Esophagus muscularis mucosa (tissue), 4 donors: ENCODE measurements at regions of chr2 and their contacts with region 1.

Region 1: GRCh38 chr2:38377050-38377828 is at the start of gene ATL2:
- DNase-seq: peak; percentile 98
- H3K4me3 ChIP-seq: peak within 1 kb of the TSS; percentile 86 to 98 (median 96)
- H3K27ac ChIP-seq: peak within 1 kb of the TSS; percentile 97 to 100 (median 100)
- H3K4me1 ChIP-seq: peaks cover 20 to 46% (median 45%) of the 10 kb centered on the region in 4 donors
- H3K27me3 ChIP-seq: no peaks in the 10 kb centered on the region
- CTCF ChIP-seq: no peak
- EP300 ChIP-seq: peak; percentile 12
- POLR2A ChIP-seq: peak; percentile 82
- total RNA-seq, gene ATL2: 159 to 260 (median 231) TPM

Region 2: DNA sequence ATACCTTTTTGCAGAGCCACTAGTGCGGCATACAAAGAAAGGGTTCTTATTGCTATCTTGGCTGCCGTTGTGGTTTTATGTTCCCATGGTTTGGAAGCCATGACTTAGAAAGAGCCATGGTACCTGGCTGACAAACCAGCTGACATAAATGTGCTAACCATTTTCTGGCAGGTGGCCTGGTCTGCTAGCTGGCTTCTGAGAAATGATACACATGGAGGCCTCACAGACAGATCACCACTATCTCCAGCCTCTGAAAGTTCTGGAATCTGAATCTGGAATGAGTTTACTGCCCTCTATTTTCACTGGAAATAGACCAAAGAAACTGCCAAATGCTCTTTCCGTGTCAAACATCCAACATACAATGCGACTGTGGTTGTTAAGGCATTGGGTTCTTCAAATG is 909.1 kb before region 1 on chr2:
- intact Hi-C with region 1: no loop called
- DNase-seq: no peak
- H3K4me3 ChIP-seq: no peak overlapping the region
- H3K27ac ChIP-seq: no peak overlapping the region
- H3K4me1 ChIP-seq: peaks cover 4 to 32% (median 21%) of the 10 kb centered on the region in 4 donors
- H3K27me3 ChIP-seq: no peaks in the 10 kb centered on the region
- CTCF ChIP-seq: no peak
- EP300 ChIP-seq: no peak
- POLR2A ChIP-seq: no peak

Region 3: DNA sequence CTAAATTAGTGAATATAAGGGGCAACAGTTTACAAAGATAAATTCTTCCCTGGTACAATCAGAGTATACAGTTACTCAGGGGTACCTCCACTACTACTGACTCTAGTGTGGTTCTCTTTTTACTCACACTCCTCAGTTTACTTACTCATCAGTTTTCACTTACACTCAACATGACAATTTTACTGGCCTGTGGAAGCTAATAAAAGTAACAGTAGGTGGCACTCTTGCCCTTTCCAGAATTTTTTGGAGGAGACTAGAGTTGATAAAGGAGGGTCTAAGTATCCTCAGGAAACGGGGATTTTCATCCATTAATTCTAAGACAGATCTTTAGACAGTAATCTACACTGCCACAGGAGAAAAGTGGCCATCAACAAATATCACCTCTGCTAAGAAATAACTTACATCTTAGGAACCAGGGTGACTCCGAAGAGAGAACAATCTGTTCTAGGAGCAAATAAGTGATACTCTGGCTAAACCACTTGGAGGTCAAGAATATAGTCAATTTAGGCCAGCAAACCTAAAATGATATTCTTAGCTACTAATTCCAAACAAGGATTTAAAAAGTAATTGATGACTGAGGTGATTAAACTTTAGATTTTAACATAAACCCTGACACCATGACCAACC is 61.4 kb before region 1 on chr2:
- intact Hi-C with region 1: loop called (anchors 5 kb)
- DNase-seq: no peak
- H3K4me3 ChIP-seq: no peak overlapping the region
- H3K27ac ChIP-seq: peak overlapping the region; percentile 41 to 69 (median 53)
- H3K4me1 ChIP-seq: peaks cover 0 to 53% (median 49%) of the 10 kb centered on the region in 4 donors
- H3K27me3 ChIP-seq: no peaks in the 10 kb centered on the region
- CTCF ChIP-seq: peak; percentile 72 to 80 (median 76)
- EP300 ChIP-seq: no peak
- POLR2A ChIP-seq: no peak

Region 4: GRCh38 chr2:38465789-38466127 is 88.5 kb after region 1 on chr2:
- intact Hi-C with region 1: loop called (anchors 2 kb)
- DNase-seq: no peak
- H3K4me3 ChIP-seq: no peak overlapping the region
- H3K27ac ChIP-seq: peak overlapping the region; percentile 85 to 95 (median 90)
- H3K4me1 ChIP-seq: peaks cover 0 to 97% (median 85%) of the 10 kb centered on the region in 4 donors
- H3K27me3 ChIP-seq: no peaks in the 10 kb centered on the region
- CTCF ChIP-seq: peak in 2 of 3 experiments; percentile 27 to 37
- EP300 ChIP-seq: no peak
- POLR2A ChIP-seq: no peak

Region 5: GRCh38 chr2:38515160-38516074 is 138.2 kb after region 1 on chr2:
- intact Hi-C with region 1: loop called (anchors 5 kb)
- DNase-seq: no peak
- H3K4me3 ChIP-seq: peak overlapping the region; percentile 40 to 56 (median 41)
- H3K27ac ChIP-seq: peak overlapping the region; percentile 87 to 90 (median 90)
- H3K4me1 ChIP-seq: peaks cover 0 to 58% (median 45%) of the 10 kb centered on the region in 4 donors
- H3K27me3 ChIP-seq: no peaks in the 10 kb centered on the region
- CTCF ChIP-seq: no peak
- EP300 ChIP-seq: no peak
- POLR2A ChIP-seq: no peak

Region 6: DNA sequence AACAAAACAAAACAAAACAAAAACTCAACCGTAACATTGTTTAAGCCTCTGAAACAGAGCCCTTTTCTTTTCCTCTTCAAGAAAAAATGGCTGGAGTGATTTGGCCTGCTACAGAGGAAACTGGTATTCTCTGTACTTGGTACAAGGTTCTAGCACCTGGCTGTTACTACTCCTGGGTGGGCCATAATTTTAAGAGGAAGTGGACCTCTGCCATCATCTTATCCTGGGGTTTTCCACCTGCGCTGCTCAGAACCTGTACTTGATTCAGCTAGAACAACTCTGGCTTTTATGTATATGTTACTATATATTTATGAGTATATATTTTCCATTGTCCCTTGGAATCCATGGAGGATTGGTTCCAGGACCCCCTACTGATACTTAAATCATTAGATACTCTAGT is 351.5 kb after region 1 on chr2:
- intact Hi-C with region 1: loop called (anchors 5 kb)
- DNase-seq: no peak
- H3K4me3 ChIP-seq: no peak overlapping the region
- H3K27ac ChIP-seq: no peak overlapping the region
- H3K4me1 ChIP-seq: peaks cover 0 to 4% (median 0%) of the 10 kb centered on the region in 4 donors
- H3K27me3 ChIP-seq: no peaks in the 10 kb centered on the region
- CTCF ChIP-seq: no peak
- EP300 ChIP-seq: no peak
- POLR2A ChIP-seq: no peak